Heart right ventricle (tissue), 16 donors: ENCODE measurements at regions of chr16 and their contacts with region 1.

Region 1: DNA sequence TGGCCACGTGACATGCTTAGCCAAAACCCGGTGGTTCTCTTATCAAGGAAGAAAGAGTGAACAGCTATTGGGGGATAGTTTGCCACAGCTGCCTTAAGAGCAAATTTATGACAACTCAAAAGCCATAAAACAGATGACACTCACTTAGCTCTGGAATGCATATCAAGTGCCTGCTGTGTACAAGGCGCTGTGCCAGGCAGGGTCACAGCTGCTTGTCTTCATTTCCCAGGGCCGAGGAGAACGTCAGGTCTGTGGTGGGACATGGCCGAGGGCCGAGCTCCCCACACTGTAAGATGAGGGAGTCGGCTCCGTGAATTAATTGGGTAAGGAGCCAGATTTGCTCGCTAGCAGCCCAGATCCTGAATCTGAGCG is 14.0 kb downstream of the EEF2K start:
- DNase-seq: peak; percentile 48 to 66
- ATAC-seq: peak; percentile 44 to 83 (median 79)
- H3K4me3 ChIP-seq: no peak overlapping the region
- H3K27ac ChIP-seq: peak overlapping the region; percentile 18 to 81 (median 58)
- H3K4me1 ChIP-seq: peaks cover 4 to 46% (median 27%) of the 10 kb centered on the region in 9 donors
- H3K27me3 ChIP-seq: no peaks in the 10 kb centered on the region
- CTCF ChIP-seq: no peak

Region 2: GRCh38 chr16:22117609-22118008 is 102.4 kb before region 1 on chr16:
- intact Hi-C with region 1: no loop called
- DNase-seq: no peak
- ATAC-seq: no peak
- H3K4me3 ChIP-seq: no peak overlapping the region
- H3K27ac ChIP-seq: no peak overlapping the region
- H3K4me1 ChIP-seq: no peaks in the 10 kb centered on the region
- H3K27me3 ChIP-seq: no peaks in the 10 kb centered on the region
- CTCF ChIP-seq: no peak

Region 3: DNA sequence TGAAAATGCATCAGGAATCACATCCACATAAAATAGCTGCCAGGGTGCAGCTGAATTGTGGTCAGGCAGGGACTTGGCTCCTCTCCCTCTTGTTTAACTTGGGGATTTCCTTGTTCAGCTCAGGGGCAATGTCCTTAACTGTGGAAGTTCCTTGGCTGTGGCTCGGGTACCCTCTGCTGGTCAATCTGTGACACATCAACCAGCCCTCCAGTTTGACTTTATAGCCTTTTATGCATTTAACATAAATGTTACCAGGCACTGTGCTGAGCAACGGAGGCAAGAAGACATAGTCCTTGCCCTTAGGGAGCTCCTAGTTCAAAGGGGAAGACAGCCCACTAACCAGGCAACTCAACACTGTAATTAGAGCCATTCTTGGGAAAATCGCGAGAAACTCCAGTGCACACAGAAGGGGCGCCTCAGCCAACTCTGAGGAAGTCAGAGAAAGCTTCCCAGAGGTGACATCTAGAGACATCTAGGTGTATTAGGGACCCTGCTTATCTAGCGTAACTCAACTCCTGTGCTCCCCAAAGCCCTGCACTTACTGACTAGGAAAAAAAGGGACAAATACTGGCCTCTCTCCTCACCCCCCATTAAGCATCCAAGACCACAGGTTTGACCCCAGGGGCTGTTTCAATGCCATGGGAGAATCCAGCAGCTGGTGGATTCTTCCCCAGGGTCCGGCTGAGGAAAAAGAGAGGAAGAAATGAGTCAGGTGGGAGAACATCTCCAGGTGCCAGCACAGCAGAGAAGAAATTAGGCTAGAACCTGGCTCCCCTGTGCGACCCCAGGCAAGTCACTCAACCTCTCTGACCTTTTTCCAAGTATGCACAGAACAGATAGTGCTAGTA is 31.2 kb before region 1 on chr16:
- intact Hi-C with region 1: no loop called
- DNase-seq: peak; percentile 39 to 74
- ATAC-seq: no peak
- H3K4me3 ChIP-seq: peak overlapping the region in 3 of 10 donors; percentile 74 to 82 (median 82)
- H3K27ac ChIP-seq: peak overlapping the region; percentile 80 to 98 (median 96)
- H3K4me1 ChIP-seq: peaks cover 8 to 43% (median 36%) of the 10 kb centered on the region in 9 donors
- H3K27me3 ChIP-seq: no peaks in the 10 kb centered on the region
- CTCF ChIP-seq: peak; percentile 71 to 91 (median 85)

Region 4: GRCh38 chr16:22232277-22233042 is 12.4 kb after region 1 on chr16:
- intact Hi-C with region 1: loop called in 1 of 10 experiments (anchors 1 kb)
- DNase-seq: no peak
- ATAC-seq: peak in 6 of 8 donors; percentile 35 to 93 (median 58)
- H3K4me3 ChIP-seq: no peak overlapping the region
- H3K27ac ChIP-seq: peak overlapping the region in 5 of 10 donors; percentile 2 to 65 (median 15)
- H3K4me1 ChIP-seq: peaks cover 0 to 17% (median 5%) of the 10 kb centered on the region in 9 donors
- H3K27me3 ChIP-seq: no peaks in the 10 kb centered on the region
- CTCF ChIP-seq: no peak